Common myeloid progenitor, CD34-positive (primary cell): ENCODE measurements at regions of chr3 and their contacts with region 1.

Region 1: GRCh38 chr3:182490596-182491491 is 302.5 kb upstream of the ATP11B start:
- DNase-seq: peak; percentile 10 to 34 (median 31)
- H3K4me3 ChIP-seq: no peak overlapping the region
- H3K27ac ChIP-seq: no peak overlapping the region
- H3K4me1 ChIP-seq: no peaks in the 10 kb centered on the region
- H3K27me3 ChIP-seq: no peaks in the 10 kb centered on the region

Region 2: DNA sequence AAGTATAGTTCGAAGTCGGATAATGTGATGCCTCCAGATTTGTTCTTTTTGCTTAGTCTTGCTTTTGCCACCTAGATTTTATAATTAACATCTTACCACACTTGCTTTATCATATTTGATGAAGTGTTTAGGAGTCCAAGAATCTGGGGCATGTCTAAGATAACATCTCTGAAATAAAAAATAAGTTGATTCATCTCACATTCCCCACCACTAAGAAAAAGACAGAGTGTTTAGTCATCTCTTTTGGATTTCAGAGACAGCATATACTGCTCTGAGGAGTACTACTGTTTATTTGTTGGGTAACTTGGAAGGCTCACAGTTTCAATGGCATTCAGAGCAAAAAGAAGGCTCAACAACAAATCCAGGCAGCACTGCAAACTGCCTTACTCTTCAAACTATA is 21.8 kb before region 1 on chr3:
- CTCF ChIA-PET with region 1: no interaction called
- POLR2A ChIA-PET with region 1: no interaction called
- DNase-seq: no peak
- H3K4me3 ChIP-seq: no peak overlapping the region
- H3K27ac ChIP-seq: no peak overlapping the region
- H3K4me1 ChIP-seq: no peaks in the 10 kb centered on the region
- H3K27me3 ChIP-seq: no peaks in the 10 kb centered on the region

Region 3: GRCh38 chr3:182501856-182502255 is 11.0 kb after region 1 on chr3:
- CTCF ChIA-PET with region 1: interaction called, 14 read pairs
- POLR2A ChIA-PET with region 1: no interaction called
- DNase-seq: no peak
- H3K4me3 ChIP-seq: no peak overlapping the region
- H3K27ac ChIP-seq: no peak overlapping the region
- H3K4me1 ChIP-seq: no peaks in the 10 kb centered on the region
- H3K27me3 ChIP-seq: peaks cover 0 to 2% (median 0%) of the 10 kb centered on the region in 5 experiments